ENCODE measurements at regions of chr13 and their contacts with region 1.

Region 1: DNA sequence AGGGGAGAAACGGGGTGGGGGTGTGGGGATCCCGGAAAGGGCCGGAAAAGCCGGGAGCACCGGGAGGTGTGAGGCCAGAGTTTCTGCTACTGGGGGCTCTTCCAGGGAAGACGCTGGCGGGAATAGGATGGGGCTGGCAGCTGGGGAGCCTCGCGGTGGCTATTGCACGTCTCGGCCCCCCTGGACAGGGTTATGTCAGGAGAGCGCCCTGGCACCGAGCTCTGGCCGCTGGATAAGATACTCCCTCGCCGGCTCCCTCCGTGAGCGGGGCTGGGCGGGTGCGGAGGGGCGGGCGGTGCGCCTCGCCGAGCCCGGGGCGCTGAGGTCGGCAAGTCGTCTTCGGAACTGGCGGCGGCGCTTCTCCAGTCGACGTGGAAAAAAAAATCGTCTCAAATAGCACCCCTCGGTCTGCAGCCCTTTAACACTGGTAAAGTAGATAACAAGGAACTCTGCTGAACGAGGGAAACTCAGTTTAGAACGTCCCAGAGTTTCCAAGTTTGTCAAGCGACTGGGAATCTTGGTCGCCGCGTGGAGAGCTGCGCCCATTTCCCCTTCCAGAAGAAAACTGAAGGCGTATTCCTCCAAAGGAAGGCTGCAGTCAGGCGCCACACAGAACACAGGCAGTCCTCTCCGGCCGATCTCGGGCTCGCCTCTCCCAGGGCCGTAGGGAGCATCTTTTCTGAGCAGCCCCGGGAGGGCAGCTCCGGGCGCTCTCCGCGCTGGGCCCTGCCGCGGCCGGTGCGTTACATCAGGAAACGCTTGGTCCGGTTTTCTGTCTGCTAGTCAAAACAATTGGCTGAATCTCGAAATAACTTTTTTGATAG is 115.1 kb downstream of the KCNRG start:
- DNase-seq: peak; percentile 65
- H3K4me3 ChIP-seq: peak overlapping the region; percentile 70
- H3K27ac ChIP-seq: peak overlapping the region; percentile 71
- H3K4me1 ChIP-seq: peaks cover 60% of the 10 kb centered on the region
- CTCF ChIP-seq: no peak

Region 2: GRCh38 chr13:50140581-50141374 is 10.4 kb after region 1 on chr13:
- CTCF ChIA-PET with region 1: interaction called, 3 read pairs
- POLR2A ChIA-PET with region 1: interaction called, 17 read pairs
- intact Hi-C with region 1: no loop called
- DNase-seq: no peak
- H3K4me3 ChIP-seq: no peak overlapping the region
- H3K27ac ChIP-seq: no peak overlapping the region
- H3K4me1 ChIP-seq: peaks cover 35% of the 10 kb centered on the region
- CTCF ChIP-seq: no peak

Region 3: DNA sequence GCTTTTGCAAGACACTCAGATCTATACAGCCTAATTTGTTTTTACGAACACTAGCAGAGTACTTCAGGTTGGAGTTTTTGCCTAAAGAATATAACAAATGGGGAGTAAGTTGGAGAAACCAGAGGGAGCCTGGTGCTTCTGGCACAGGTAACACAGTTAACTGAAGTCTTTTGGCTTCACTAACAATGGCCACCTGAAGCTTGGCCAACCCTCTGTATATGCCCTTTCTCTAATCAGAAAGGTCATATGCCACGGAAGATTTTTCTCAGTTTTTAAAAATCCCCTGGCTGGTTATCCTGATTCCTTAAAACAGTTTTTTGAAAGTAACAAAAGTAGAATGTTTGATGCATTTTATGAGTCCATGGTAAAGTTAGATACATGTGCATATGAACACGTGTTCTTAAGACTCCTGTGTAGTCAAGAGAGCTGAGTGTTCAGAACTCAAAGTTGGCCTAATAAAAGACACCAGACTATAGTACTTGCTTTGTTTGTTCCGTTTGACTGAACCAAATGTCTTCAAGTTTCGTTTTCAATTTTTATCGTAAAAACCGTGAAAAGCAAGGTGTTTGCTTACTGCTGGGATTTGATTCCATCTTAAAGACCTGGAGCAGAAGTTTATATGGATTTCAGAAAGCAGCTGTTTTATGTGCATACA is 22.4 kb after region 1 on chr13:
- CTCF ChIA-PET with region 1: no interaction called
- POLR2A ChIA-PET with region 1: interaction called, 4 read pairs
- intact Hi-C with region 1: loop called (anchors 2 kb)
- DNase-seq: peak; percentile 81
- H3K4me3 ChIP-seq: peak overlapping the region; percentile 52
- H3K27ac ChIP-seq: peak overlapping the region; percentile 79
- H3K4me1 ChIP-seq: peaks cover 49% of the 10 kb centered on the region
- CTCF ChIP-seq: no peak

Region 4: GRCh38 chr13:51167393-51168191 is 1037.3 kb after region 1 on chr13:
- CTCF ChIA-PET with region 1: no interaction called
- POLR2A ChIA-PET with region 1: no interaction called
- intact Hi-C with region 1: no loop called
- DNase-seq: no peak
- H3K4me3 ChIP-seq: no peak overlapping the region
- H3K27ac ChIP-seq: no peak overlapping the region
- H3K4me1 ChIP-seq: no peaks in the 10 kb centered on the region
- CTCF ChIP-seq: no peak

Measured in OCI-LY7 (cell line).